ENCODE measurements at regions of chr12 and their contacts with region 1.

Region 1: GRCh38 chr12:53251477-53252348 is 16.4 kb upstream of the ESPL1 start:
- DNase-seq: peak; percentile 89
- ATAC-seq: peak; percentile 93

Region 2: DNA sequence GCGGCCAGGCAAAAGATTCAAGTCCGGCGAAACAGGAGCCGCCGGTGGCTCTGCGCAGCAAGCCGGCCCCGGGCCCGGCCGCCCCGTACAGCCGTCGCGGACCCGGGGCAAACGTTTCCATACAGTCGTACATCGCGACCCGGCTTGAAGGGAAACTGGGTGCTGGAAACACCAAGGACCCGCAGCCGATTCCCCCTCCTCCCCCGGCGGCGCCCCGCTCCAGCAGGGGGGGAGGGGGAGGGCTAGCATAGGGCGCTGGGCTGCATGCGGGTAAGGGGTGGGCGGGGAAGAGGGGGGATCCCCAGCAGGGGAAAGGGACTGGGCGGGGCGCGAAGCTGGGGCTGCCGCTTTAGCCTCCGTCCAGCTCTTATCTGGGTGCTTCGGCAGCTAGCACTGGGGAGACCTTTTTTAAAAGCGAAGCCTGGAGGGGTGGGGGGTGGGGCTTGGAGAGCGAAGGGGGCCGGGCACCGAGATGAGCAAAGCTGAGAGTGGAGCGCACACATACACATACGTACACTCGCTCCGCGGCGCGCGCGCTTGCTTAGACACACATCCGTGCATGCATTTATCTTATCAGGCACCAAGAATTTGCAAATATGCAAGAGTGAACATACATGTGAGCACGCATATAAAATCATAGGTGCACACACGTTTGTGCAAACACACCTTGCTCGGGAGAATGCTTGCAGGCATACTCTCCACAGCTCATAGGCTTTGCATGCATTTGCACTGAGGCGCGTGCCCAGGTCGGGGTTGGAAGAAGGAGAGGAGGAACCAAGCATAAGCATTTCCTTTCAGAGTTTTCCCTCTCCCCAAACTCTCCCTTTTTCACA is 31.5 kb before region 1 on chr12:
- intact Hi-C with region 1: loop called (anchors 5 kb)
- DNase-seq: peak; percentile 87
- ATAC-seq: peak; percentile 43